ENCODE measurements at regions of chr13 and their contacts with region 1.

Region 1: GRCh38 chr13:77779552-77780272 is 82.2 kb downstream of the SLAIN1 start:
- DNase-seq: peak in 5 of 9 donors; percentile 23 to 41 (median 25)
- ATAC-seq: peak; percentile 81
- H3K4me3 ChIP-seq: no peak overlapping the region
- H3K4me3 Mint-ChIP-seq: no peak overlapping the region
- H3K27ac ChIP-seq: no peak overlapping the region
- H3K27ac Mint-ChIP-seq: peak overlapping the region in 1 of 9 donors; percentile 16
- H3K4me1 ChIP-seq: no peaks in the 10 kb centered on the region
- H3K4me1 Mint-ChIP-seq: peaks cover 4 to 12% (median 8%) of the 10 kb centered on the region in 7 donors
- H3K27me3 ChIP-seq: no peaks in the 10 kb centered on the region
- H3K27me3 Mint-ChIP-seq: peaks cover 0 to 8% (median 2%) of the 10 kb centered on the region in 5 donors

Region 2: DNA sequence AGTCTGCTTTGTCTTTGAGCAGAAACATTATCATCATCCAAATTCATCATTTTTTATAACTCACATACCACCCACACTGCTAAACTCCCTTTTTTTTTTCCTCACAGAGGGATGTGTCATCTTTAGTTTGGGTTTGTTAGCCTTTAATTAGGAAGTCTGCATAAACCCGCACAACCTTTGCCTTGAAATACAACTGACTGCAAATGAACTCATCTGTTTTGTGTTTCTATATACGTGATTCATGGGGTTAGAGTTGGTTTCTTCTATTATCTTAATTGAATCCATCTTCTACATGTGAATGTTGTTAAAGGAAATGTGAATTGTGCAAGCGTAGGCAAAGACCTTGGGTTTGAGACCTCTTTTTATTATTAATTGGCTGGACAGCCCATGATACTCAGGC is 20.5 kb after region 1 on chr13:
- CTCF ChIA-PET with region 1: no interaction called
- POLR2A ChIA-PET with region 1: no interaction called
- intact Hi-C with region 1: no loop called
- DNase-seq: no peak
- ATAC-seq: no peak
- H3K4me3 ChIP-seq: no peak overlapping the region
- H3K4me3 Mint-ChIP-seq: no peak overlapping the region
- H3K27ac ChIP-seq: no peak overlapping the region
- H3K27ac Mint-ChIP-seq: no peak overlapping the region
- H3K4me1 ChIP-seq: no peaks in the 10 kb centered on the region
- H3K4me1 Mint-ChIP-seq: no peaks in the 10 kb centered on the region
- H3K27me3 ChIP-seq: no peaks in the 10 kb centered on the region
- H3K27me3 Mint-ChIP-seq: peaks cover 5 to 22% (median 9%) of the 10 kb centered on the region in 5 donors

Region 3: DNA sequence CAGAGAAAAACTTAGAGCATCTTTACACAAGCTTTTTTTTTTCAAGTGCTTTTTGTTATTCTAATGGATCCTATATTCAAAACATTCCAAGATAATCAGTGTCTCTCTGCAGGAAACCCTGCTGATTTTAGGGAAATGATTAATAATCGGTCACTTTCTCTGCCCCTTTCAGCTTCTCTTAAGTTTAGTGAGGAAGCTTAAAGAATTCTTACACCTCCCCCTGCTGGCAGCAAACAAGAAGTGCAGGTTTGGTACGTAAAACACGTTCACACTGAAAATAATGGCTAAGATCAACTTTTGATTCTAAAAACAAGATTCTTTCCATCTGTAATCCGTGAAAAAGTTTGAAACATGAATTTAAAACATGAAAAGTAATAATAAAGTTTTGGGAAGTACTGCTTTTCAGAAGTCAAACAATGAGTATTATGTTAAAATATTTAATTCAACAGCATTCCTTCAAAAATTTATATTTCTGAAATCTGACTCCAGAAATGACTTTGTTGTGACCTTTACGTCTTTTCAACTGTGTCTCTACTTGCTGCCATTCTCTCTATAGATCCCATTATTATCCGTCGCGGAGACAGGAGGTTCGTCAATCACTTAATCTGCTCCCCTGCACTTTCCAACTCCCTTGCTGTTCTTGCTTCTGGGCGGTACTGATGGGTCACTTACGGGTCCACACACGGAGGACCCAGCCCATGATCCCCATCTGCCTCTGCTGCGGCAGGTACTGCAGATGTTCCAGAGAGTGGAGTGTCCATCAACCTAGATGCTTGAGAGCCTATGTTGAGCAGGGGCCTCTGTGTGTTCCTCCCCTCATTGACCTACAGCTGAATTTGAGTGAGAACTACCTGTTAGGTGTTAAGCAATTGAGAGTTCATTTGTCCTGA is 342.0 kb after region 1 on chr13:
- CTCF ChIA-PET with region 1: interaction called, 5 read pairs
- POLR2A ChIA-PET with region 1: no interaction called
- intact Hi-C with region 1: loop called in 1 of 2 experiments (anchors 1 kb)
- DNase-seq: peak in 7 of 9 donors; percentile 7 to 44 (median 36)
- ATAC-seq: no peak
- H3K4me3 ChIP-seq: no peak overlapping the region
- H3K4me3 Mint-ChIP-seq: no peak overlapping the region
- H3K27ac ChIP-seq: no peak overlapping the region
- H3K27ac Mint-ChIP-seq: no peak overlapping the region
- H3K4me1 ChIP-seq: no peaks in the 10 kb centered on the region
- H3K4me1 Mint-ChIP-seq: peaks cover 0 to 11% (median 0%) of the 10 kb centered on the region in 7 donors
- H3K27me3 ChIP-seq: no peaks in the 10 kb centered on the region
- H3K27me3 Mint-ChIP-seq: peaks cover 8 to 32% (median 24%) of the 10 kb centered on the region in 5 donors

Region 4: GRCh38 chr13:78907006-78907405 is 1127.3 kb after region 1 on chr13:
- CTCF ChIA-PET with region 1: no interaction called
- POLR2A ChIA-PET with region 1: no interaction called
- intact Hi-C with region 1: no loop called
- DNase-seq: no peak
- ATAC-seq: no peak
- H3K4me3 ChIP-seq: no peak overlapping the region
- H3K4me3 Mint-ChIP-seq: no peak overlapping the region
- H3K27ac ChIP-seq: no peak overlapping the region
- H3K27ac Mint-ChIP-seq: no peak overlapping the region
- H3K4me1 ChIP-seq: no peaks in the 10 kb centered on the region
- H3K4me1 Mint-ChIP-seq: no peaks in the 10 kb centered on the region
- H3K27me3 ChIP-seq: no peaks in the 10 kb centered on the region
- H3K27me3 Mint-ChIP-seq: peaks cover 0 to 8% (median 0%) of the 10 kb centered on the region in 5 donors

Measured in naive thymus-derived CD4-positive, alpha-beta T cell (primary cell).